ENCODE measurements at regions of chr17 and their contacts with region 1.

Region 1: DNA sequence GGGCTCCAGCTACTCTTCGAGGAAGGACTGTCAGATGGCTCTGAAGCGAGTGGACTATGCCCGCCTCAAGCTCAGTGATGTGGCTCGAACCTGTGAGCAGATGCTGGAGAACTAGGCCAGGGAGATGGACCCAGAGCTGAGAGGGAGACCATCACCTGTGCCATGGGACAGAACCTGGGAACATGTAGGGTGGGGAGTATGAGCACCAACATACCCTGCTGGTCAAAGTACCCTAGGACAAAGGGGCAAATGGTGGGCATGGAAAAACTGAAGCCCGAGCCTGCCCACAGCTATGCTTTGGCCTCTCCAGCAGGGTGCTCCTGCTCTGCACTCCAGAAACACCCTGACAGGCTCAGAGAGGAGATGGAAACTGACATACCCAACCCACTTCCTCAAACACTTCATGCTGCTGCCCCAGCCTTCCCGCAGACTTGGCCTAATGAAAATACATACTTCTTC is 1.9 kb downstream of the MED11 start:
- H3K4me3 Mint-ChIP-seq: no peak overlapping the region
- H3K27ac Mint-ChIP-seq: peak overlapping the region; percentile 96
- H3K4me1 Mint-ChIP-seq: peaks cover 64% of the 10 kb centered on the region
- H3K27me3 Mint-ChIP-seq: no peaks in the 10 kb centered on the region

Region 2: GRCh38 chr17:4709794-4710692 is 23.1 kb before region 1 on chr17 and contains the start of gene ARRB2:
- intact Hi-C with region 1: loop called (anchors 1 kb)
- H3K4me3 Mint-ChIP-seq: peak within 1 kb of the TSS; percentile 86
- H3K27ac Mint-ChIP-seq: peak within 1 kb of the TSS; percentile 95
- H3K4me1 Mint-ChIP-seq: peaks cover 49% of the 10 kb centered on the region
- H3K27me3 Mint-ChIP-seq: no peaks in the 10 kb centered on the region

Region 3: GRCh38 chr17:4759776-4760236 is 26.7 kb after region 1 on chr17:
- intact Hi-C with region 1: loop called (anchors 1 kb)
- H3K4me3 Mint-ChIP-seq: no peak overlapping the region
- H3K27ac Mint-ChIP-seq: peak overlapping the region; percentile 82
- H3K4me1 Mint-ChIP-seq: peaks cover 39% of the 10 kb centered on the region
- H3K27me3 Mint-ChIP-seq: peaks cover 14% of the 10 kb centered on the region

Region 4: DNA sequence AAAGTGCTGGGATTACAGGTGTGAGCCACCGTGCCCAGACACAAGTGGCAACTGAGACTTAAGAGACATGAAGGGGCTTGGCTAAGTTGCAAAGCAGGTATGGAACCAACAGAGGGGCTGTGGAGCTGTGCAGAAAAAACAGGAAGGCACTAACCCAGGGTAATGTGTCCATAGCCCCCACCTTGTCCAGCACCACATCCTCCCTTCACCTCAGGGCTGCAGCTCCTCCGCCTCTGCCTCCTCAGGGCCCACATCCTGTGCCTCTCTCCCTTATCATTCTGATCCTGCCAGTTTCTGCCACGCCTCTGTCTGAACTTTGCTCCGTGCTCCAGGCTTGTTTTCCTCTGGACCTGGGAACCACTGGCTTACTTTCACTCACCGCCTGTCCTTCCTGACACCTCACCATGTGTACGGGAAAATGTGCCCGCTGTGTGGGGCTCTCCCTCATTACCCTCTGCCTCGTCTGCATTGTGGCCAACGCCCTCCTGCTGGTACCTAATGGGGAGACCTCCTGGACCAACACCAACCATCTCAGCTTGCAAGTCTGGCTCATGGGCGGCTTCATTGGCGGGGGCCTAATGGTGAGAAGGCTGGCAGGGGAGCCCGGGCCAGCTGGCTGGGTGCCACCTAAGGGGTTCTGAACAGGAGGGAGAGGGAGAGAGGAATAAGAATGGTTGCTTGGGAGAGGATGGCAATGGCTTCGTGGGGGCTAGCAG is 38.6 kb after region 1 on chr17 and contains the start of gene TM4SF5:
- intact Hi-C with region 1: loop called (anchors 2 kb)
- H3K4me3 Mint-ChIP-seq: no peak within 1 kb of the TSS
- H3K27ac Mint-ChIP-seq: peak within 1 kb of the TSS; percentile 86
- H3K4me1 Mint-ChIP-seq: peaks cover 52% of the 10 kb centered on the region
- H3K27me3 Mint-ChIP-seq: peaks cover 6% of the 10 kb centered on the region

Region 5: GRCh38 chr17:4789901-4790704 is 57.0 kb after region 1 on chr17:
- intact Hi-C with region 1: loop called (anchors 5 kb)
- H3K4me3 Mint-ChIP-seq: peak overlapping the region; percentile 84
- H3K27ac Mint-ChIP-seq: peak overlapping the region; percentile 94
- H3K4me1 Mint-ChIP-seq: peaks cover 57% of the 10 kb centered on the region
- H3K27me3 Mint-ChIP-seq: peaks cover 42% of the 10 kb centered on the region

Region 6: GRCh38 chr17:4891411-4892342 is 158.6 kb after region 1 on chr17:
- intact Hi-C with region 1: loop called (anchors 5 kb)
- H3K4me3 Mint-ChIP-seq: no peak overlapping the region
- H3K27ac Mint-ChIP-seq: no peak overlapping the region
- H3K4me1 Mint-ChIP-seq: peaks cover 36% of the 10 kb centered on the region
- H3K27me3 Mint-ChIP-seq: no peaks in the 10 kb centered on the region

Measured in dendritic cell treated with granulocyte-macrophage colony-stimulating factor and Interleukin-4, amounts not matched to agents 40 ng/mL and 50 ng/mL, for 4 days (primary cell).